HepG2 (cell line): ENCODE measurements at regions of chr5 and their contacts with region 1.

Region 1: DNA sequence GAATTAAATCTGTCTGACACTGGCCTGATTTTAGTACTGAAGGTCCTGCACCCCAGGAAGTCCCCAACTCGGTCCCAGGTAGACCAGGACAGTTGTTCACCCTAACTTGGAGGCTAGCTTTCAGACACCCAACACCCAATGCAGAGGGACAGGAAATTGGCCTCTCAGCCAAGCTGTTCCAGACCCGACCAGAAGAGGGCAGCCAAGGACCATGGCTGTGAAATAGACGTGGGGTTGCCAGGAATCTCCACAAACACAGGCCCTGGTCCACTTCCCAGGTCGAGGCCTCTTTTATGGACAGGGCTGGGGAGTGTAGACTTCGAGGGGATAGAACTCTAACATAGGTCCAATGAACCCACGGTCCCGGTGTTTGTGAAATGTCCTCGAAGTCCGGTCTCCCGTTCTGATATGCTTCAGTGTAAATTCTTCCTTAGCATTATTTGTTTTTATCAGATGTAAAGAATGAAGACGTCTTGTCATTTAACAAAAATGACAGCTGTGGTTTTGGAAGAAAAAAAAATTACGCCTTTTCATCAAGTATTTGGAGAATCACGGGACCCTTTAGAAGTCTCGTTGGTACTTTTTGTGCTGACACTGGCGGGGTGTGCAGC is 260.3 kb upstream of the ADAMTS16 start:
- DNase-seq: peak; percentile 44
- ATAC-seq: peak; percentile 95
- H3K4me3 ChIP-seq: no peak overlapping the region
- H3K27ac ChIP-seq: no peak overlapping the region
- H3K4me1 ChIP-seq: no peaks in the 10 kb centered on the region
- H3K27me3 ChIP-seq: peaks cover 3 to 19% of the 10 kb centered on the region in 2 experiments; a peak in 3 of 5 replicates
- CTCF ChIP-seq: peak; percentile 94
- EP300 ChIP-seq: no peak
- POLR2A ChIP-seq: no peak
- RAD21 ChIP-seq: peak; percentile 81

Region 2: DNA sequence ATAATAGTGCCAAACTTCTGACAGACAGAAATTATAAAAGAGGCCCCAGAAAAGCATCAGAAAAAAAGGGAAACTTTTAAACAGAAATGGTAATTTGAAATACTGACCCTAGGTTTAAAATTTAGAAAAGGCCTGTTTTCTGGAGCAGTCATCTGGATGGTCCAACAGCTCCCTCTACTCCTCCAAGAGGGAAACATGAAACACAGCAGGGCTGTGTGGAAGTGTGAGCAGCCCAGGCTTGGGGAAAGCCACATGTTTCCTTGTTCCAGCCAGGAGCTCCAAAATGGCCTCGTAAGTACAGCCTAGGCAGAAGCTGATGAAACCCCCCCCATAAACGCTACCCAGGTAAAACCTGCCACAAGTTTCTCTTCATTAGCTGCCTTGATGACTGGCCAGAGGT is 239.0 kb before region 1 on chr5:
- CTCF ChIA-PET with region 1: no interaction called
- POLR2A ChIA-PET with region 1: no interaction called
- in situ Hi-C with region 1: no loop called
- intact Hi-C with region 1: no loop called
- DNase-seq: no peak
- ATAC-seq: peak; percentile 48; the same call in 1 of the 3 replicates
- H3K4me3 ChIP-seq: no peak overlapping the region
- H3K27ac ChIP-seq: no peak overlapping the region
- H3K4me1 ChIP-seq: no peaks in the 10 kb centered on the region
- H3K27me3 ChIP-seq: no peaks in the 10 kb centered on the region
- CTCF ChIP-seq: no peak
- EP300 ChIP-seq: no peak
- POLR2A ChIP-seq: no peak
- RAD21 ChIP-seq: no peak

Region 3: GRCh38 chr5:4674166-4674565 is 205.6 kb before region 1 on chr5:
- CTCF ChIA-PET with region 1: no interaction called
- POLR2A ChIA-PET with region 1: no interaction called
- in situ Hi-C with region 1: no loop called
- intact Hi-C with region 1: no loop called
- DNase-seq: no peak
- ATAC-seq: no peak
- H3K4me3 ChIP-seq: no peak overlapping the region
- H3K27ac ChIP-seq: no peak overlapping the region
- H3K4me1 ChIP-seq: no peaks in the 10 kb centered on the region
- H3K27me3 ChIP-seq: no peaks in the 10 kb centered on the region
- CTCF ChIP-seq: no peak
- EP300 ChIP-seq: no peak
- POLR2A ChIP-seq: no peak
- RAD21 ChIP-seq: no peak

Region 4: GRCh38 chr5:4847766-4848165 is 32.0 kb before region 1 on chr5:
- CTCF ChIA-PET with region 1: no interaction called
- POLR2A ChIA-PET with region 1: no interaction called
- in situ Hi-C with region 1: no loop called
- intact Hi-C with region 1: no loop called
- DNase-seq: no peak
- ATAC-seq: no peak
- H3K4me3 ChIP-seq: no peak overlapping the region
- H3K27ac ChIP-seq: no peak overlapping the region
- H3K4me1 ChIP-seq: no peaks in the 10 kb centered on the region
- H3K27me3 ChIP-seq: no peaks in the 10 kb centered on the region
- CTCF ChIP-seq: no peak
- EP300 ChIP-seq: no peak
- POLR2A ChIP-seq: no peak
- RAD21 ChIP-seq: no peak

Region 5: DNA sequence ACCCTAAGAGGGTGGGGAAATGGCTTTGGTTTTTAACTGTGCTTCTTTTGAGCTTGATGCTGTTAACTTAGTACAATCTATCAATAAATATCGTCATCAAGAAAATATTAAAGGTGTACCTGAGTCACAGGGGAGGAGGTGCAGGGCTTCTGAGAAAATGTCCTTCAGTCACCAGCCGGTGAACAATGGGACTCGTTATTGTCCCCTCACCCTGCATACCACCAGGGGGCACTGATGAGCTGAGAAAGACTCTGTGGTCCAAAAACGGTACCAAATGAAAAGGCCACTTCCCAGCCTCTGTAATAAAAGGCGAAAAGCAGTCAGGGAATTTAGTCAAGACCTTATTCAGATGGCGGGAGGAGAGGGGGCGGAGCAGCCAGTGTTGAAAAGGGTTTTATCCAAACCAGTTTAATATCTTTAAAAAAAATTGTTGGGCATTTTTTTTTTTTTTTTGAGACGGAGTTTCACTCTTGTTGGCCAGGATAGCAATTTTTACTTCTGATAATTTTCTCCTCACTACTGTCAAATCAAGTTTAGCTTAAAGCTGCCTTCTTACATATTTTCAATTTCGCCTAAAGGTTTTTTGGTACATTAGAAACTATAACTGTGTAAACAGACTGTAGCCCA is 11.6 kb before region 1 on chr5:
- CTCF ChIA-PET with region 1: no interaction called
- POLR2A ChIA-PET with region 1: no interaction called
- in situ Hi-C with region 1: no loop called
- intact Hi-C with region 1: no loop called
- DNase-seq: peak; percentile 42
- ATAC-seq: peak; percentile 87
- H3K4me3 ChIP-seq: no peak overlapping the region
- H3K27ac ChIP-seq: no peak overlapping the region
- H3K4me1 ChIP-seq: no peaks in the 10 kb centered on the region
- H3K27me3 ChIP-seq: peaks cover 0 to 14% of the 10 kb centered on the region in 2 experiments; a peak in 3 of 5 replicates
- CTCF ChIP-seq: peak; percentile 76
- EP300 ChIP-seq: no peak
- POLR2A ChIP-seq: no peak
- RAD21 ChIP-seq: 0 out of 2 replicates have a peak, but pooled peaks have one; percentile 44

Region 6: GRCh38 chr5:5063533-5063953 is 183.7 kb after region 1 on chr5:
- CTCF ChIA-PET with region 1: no interaction called
- POLR2A ChIA-PET with region 1: no interaction called
- in situ Hi-C with region 1: no loop called
- intact Hi-C with region 1: loop called (anchors 1 kb)
- DNase-seq: peak; percentile 83
- ATAC-seq: peak; percentile 99
- H3K4me3 ChIP-seq: no peak overlapping the region
- H3K27ac ChIP-seq: no peak overlapping the region
- H3K4me1 ChIP-seq: peaks cover 22% of the 10 kb centered on the region
- H3K27me3 ChIP-seq: peaks cover 0 to 6% of the 10 kb centered on the region in 2 experiments; a peak in 1 of 5 replicates
- CTCF ChIP-seq: peak; percentile 49
- EP300 ChIP-seq: no peak
- POLR2A ChIP-seq: no peak
- RAD21 ChIP-seq: peak; percentile 32; the same call in 1 of the 2 replicates